AG04449 (cell line): ENCODE measurements at regions of chr7 and their contacts with region 1.

Region 1: GRCh38 chr7:139602143-139602722 is 78.7 kb downstream of the CLEC2L start:
- DNase-seq: peak; percentile 10
- H3K4me3 ChIP-seq: no peak overlapping the region
- CTCF ChIP-seq: peak; percentile 54

Region 2: DNA sequence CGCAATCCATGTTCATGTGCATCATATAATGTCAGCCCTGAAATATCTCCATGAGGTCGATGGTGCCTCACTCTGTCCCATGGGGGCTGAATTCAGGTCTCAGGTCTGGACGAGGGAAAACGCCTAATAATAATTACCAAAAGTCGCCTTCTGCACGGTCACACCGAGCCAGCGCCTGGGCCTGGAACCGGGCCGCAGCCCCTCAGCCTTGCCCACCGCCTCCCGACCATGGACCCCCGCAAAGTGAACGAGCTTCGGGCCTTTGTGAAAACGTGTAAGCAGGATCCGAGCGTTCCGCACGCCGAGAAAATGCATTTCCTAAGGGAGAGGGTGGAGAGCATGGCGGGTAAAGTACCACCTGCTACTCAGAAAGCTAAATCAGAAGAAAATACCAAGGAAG is 100.0 kb before region 1 on chr7:
- CTCF ChIA-PET with region 1: interaction called, 16 read pairs
- POLR2A ChIA-PET with region 1: no interaction called
- DNase-seq: no peak
- H3K4me3 ChIP-seq: no peak overlapping the region
- CTCF ChIP-seq: no peak

Region 3: GRCh38 chr7:139562961-139563565 is 39.2 kb before region 1 on chr7:
- CTCF ChIA-PET with region 1: interaction called, 10 read pairs
- POLR2A ChIA-PET with region 1: no interaction called
- DNase-seq: no peak
- H3K4me3 ChIP-seq: no peak overlapping the region
- CTCF ChIP-seq: no peak

Region 4: GRCh38 chr7:139613971-139614411 is 11.8 kb after region 1 on chr7:
- CTCF ChIA-PET with region 1: interaction called, 53 read pairs
- POLR2A ChIA-PET with region 1: no interaction called
- DNase-seq: no peak
- H3K4me3 ChIP-seq: no peak overlapping the region
- CTCF ChIP-seq: no peak

Region 5: GRCh38 chr7:139995017-139995931 is 393.0 kb after region 1 on chr7:
- CTCF ChIA-PET with region 1: interaction called, 136 read pairs
- POLR2A ChIA-PET with region 1: no interaction called
- DNase-seq: no peak
- H3K4me3 ChIP-seq: no peak overlapping the region
- CTCF ChIP-seq: no peak